ENCODE measurements at regions of chr14 and their contacts with region 1.

Region 1: DNA sequence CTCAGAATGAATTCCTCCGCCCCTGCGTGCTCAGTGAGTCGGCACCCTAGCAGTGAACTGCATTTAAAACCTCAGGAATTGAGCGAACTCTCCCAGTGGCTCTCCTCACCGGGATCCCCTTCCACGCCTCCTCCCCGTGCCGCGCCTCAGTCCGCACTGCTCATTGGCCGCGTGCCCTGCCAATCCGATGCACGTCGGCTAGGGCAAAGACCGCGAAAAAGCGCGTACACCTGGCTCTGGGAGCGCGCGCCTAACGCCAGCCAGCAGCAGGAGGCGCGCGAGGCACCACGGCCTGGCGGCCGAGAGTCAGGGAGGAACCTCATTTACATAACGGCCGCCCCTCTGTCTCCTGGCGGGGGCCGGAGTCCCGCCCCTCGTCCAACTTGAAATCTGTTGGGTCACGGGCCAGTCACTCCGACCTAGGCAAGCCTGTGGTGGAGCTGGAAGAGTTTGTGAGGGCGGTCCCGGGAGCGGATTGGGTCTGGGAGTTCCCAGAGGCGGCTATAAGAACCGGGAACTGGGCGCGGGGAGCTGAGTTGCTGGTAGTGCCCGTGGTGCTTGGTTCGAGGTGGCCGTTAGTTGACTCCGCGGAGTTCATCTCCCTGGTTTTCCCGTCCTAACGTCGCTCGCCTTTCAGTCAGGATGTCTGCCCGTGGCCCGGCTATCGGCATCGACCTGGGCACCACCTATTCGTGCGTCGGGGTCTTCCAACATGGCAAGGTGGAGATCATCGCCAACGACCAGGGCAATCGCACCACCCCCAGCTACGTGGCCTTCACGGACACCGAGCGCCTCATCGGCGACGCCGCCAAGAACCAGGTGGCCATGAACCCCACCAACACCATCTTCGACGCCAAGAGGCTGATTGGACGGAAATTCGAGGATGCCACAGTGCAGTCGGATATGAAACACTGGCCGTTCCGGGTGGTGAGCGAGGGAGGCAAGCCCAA is at the start of gene HSPA2:
- DNase-seq: peak; percentile 85 to 98 (median 92)
- ATAC-seq: peak; percentile 84
- H3K4me3 ChIP-seq: peak within 1 kb of the TSS; percentile 86
- H3K4me3 Mint-ChIP-seq: peak within 1 kb of the TSS; percentile 98
- H3K27ac ChIP-seq: no peak within 1 kb of the TSS
- H3K27ac Mint-ChIP-seq: peak within 1 kb of the TSS; percentile 78
- H3K4me1 ChIP-seq: peaks cover 41% of the 10 kb centered on the region
- H3K4me1 Mint-ChIP-seq: peaks cover 43% of the 10 kb centered on the region
- H3K27me3 ChIP-seq: no peaks in the 10 kb centered on the region
- H3K27me3 Mint-ChIP-seq: peaks cover 6% of the 10 kb centered on the region
- CTCF ChIP-seq: peak; percentile 72
- total RNA-seq, gene HSPA2: 1.5 to 1.9 TPM

Region 2: GRCh38 chr14:64573109-64573508 is 32.6 kb after region 1 on chr14:
- CTCF ChIA-PET with region 1: no interaction called
- POLR2A ChIA-PET with region 1: no interaction called
- intact Hi-C with region 1: no loop called
- DNase-seq: no peak
- ATAC-seq: no peak
- H3K4me3 ChIP-seq: no peak overlapping the region
- H3K4me3 Mint-ChIP-seq: no peak overlapping the region
- H3K27ac ChIP-seq: no peak overlapping the region
- H3K27ac Mint-ChIP-seq: no peak overlapping the region
- H3K4me1 ChIP-seq: no peaks in the 10 kb centered on the region
- H3K4me1 Mint-ChIP-seq: no peaks in the 10 kb centered on the region
- H3K27me3 ChIP-seq: no peaks in the 10 kb centered on the region
- H3K27me3 Mint-ChIP-seq: no peaks in the 10 kb centered on the region
- CTCF ChIP-seq: no peak

Region 3: GRCh38 chr14:64636208-64636979 is 95.9 kb after region 1 on chr14:
- CTCF ChIA-PET with region 1: no interaction called
- POLR2A ChIA-PET with region 1: interaction called, 9 read pairs
- intact Hi-C with region 1: loop called (anchors 1 to 2 kb)
- DNase-seq: peak; percentile 44 to 83 (median 65)
- ATAC-seq: peak; percentile 95
- H3K4me3 ChIP-seq: no peak overlapping the region
- H3K4me3 Mint-ChIP-seq: no peak overlapping the region
- H3K27ac ChIP-seq: no peak overlapping the region
- H3K27ac Mint-ChIP-seq: no peak overlapping the region
- H3K4me1 ChIP-seq: peaks cover 6% of the 10 kb centered on the region
- H3K4me1 Mint-ChIP-seq: no peaks in the 10 kb centered on the region
- H3K27me3 ChIP-seq: peaks cover 0 to 9% of the 10 kb centered on the region in 2 experiments
- H3K27me3 Mint-ChIP-seq: peaks cover 11% of the 10 kb centered on the region
- CTCF ChIP-seq: peak; percentile 92

Region 4: GRCh38 chr14:64764641-64765520 is 224.4 kb after region 1 on chr14:
- CTCF ChIA-PET with region 1: no interaction called
- POLR2A ChIA-PET with region 1: no interaction called
- intact Hi-C with region 1: loop called in 1 of 2 experiments (anchors 10 kb)
- DNase-seq: peak; percentile 44 to 86 (median 58)
- ATAC-seq: peak; percentile 76
- H3K4me3 ChIP-seq: peak overlapping the region; percentile 33
- H3K4me3 Mint-ChIP-seq: peak overlapping the region; percentile 67
- H3K27ac ChIP-seq: no peak overlapping the region
- H3K27ac Mint-ChIP-seq: no peak overlapping the region
- H3K4me1 ChIP-seq: peaks cover 61% of the 10 kb centered on the region
- H3K4me1 Mint-ChIP-seq: peaks cover 32% of the 10 kb centered on the region
- H3K27me3 ChIP-seq: no peaks in the 10 kb centered on the region
- H3K27me3 Mint-ChIP-seq: no peaks in the 10 kb centered on the region
- CTCF ChIP-seq: peak; percentile 85

Region 5: GRCh38 chr14:64914237-64914971 is 373.9 kb after region 1 on chr14 and contains the start of gene CHURC1:
- CTCF ChIA-PET with region 1: no interaction called
- POLR2A ChIA-PET with region 1: interaction called, 6 read pairs
- intact Hi-C with region 1: loop called in 1 of 2 experiments (anchors 10 kb)
- DNase-seq: peak; percentile 94 to 99 (median 96)
- ATAC-seq: peak; percentile 95
- H3K4me3 ChIP-seq: peak within 1 kb of the TSS; percentile 86
- H3K4me3 Mint-ChIP-seq: peak within 1 kb of the TSS; percentile 93
- H3K27ac ChIP-seq: peak within 1 kb of the TSS; percentile 99
- H3K27ac Mint-ChIP-seq: peak within 1 kb of the TSS; percentile 88
- H3K4me1 ChIP-seq: peaks cover 34% of the 10 kb centered on the region
- H3K4me1 Mint-ChIP-seq: peaks cover 57% of the 10 kb centered on the region
- H3K27me3 ChIP-seq: peaks cover 0 to under 1% of the 10 kb centered on the region in 2 experiments
- H3K27me3 Mint-ChIP-seq: no peaks in the 10 kb centered on the region
- CTCF ChIP-seq: no peak
- total RNA-seq, gene CHURC1: 50.1 to 54.0 TPM